PC-3 (cell line): ENCODE measurements at regions of chr16 and their contacts with region 1.

Region 1: GRCh38 chr16:252366-253337 is 18.0 kb downstream of the FAM234A start:
- DNase-seq: no peak
- ATAC-seq: no peak
- H3K4me3 ChIP-seq: no peak overlapping the region
- H3K27ac ChIP-seq: no peak overlapping the region
- H3K4me1 ChIP-seq: peaks cover 9% of the 10 kb centered on the region; the same call in 1 of the 2 replicates
- H3K27me3 ChIP-seq: no peaks in the 10 kb centered on the region
- CTCF ChIP-seq: no peak

Region 2: DNA sequence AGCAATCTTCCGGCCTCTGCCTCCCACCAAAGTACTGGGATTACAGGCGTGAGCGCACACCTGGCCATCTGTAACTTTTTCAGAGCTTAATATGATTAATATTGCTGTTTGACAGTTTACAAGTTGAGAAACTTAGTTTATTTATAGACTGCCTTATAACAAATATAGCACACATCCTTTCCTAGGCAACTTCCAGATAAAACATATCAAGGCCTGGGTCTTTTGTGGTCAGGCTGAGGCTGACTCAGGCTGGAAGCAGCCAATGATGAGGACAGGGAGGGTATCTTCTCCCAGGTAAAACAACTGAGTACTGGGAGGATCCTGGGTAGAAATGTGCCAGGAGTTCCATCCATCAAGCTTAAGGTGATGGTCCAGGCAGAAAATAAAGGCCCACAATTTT is 39.7 kb before region 1 on chr16:
- CTCF ChIA-PET with region 1: no interaction called
- POLR2A ChIA-PET with region 1: no interaction called
- intact Hi-C with region 1: no loop called
- DNase-seq: no peak
- ATAC-seq: no peak
- H3K4me3 ChIP-seq: no peak overlapping the region
- H3K27ac ChIP-seq: no peak overlapping the region
- H3K4me1 ChIP-seq: no peaks in the 10 kb centered on the region
- H3K27me3 ChIP-seq: no peaks in the 10 kb centered on the region
- CTCF ChIP-seq: no peak

Region 3: GRCh38 chr16:242281-242680 is 10.4 kb before region 1 on chr16:
- CTCF ChIA-PET with region 1: no interaction called
- POLR2A ChIA-PET with region 1: interaction called, 19 read pairs
- intact Hi-C with region 1: no loop called
- DNase-seq: no peak
- ATAC-seq: 0 out of 2 replicates have a peak, but pooled peaks have one; percentile 15
- H3K4me3 ChIP-seq: no peak overlapping the region
- H3K27ac ChIP-seq: no peak overlapping the region
- H3K4me1 ChIP-seq: no peaks in the 10 kb centered on the region
- H3K27me3 ChIP-seq: no peaks in the 10 kb centered on the region
- CTCF ChIP-seq: no peak

Region 4: DNA sequence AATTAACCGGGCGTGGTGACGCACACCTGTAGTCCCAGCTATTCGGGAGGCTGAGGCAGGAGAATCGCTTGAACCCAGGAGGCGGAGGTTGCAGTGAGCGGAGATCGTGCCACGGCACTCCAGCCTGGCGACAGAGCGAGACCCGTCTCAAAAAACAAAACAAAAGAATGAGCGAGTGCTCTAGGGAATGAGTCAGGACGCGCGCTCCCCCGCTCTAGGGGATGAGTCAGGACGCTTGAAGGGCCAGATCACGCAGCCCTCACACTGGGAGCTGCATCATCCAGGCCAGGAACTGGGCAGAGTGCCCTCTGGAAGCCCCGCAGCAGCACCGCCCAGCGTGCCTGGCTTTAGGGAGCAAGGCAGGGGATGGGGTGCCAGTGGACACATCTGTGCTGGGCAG is 374.1 kb after region 1 on chr16:
- CTCF ChIA-PET with region 1: no interaction called
- POLR2A ChIA-PET with region 1: interaction called, 16 read pairs
- intact Hi-C with region 1: no loop called
- DNase-seq: peak; percentile 92
- ATAC-seq: peak; percentile 84
- H3K4me3 ChIP-seq: peak overlapping the region; percentile 27; the same call in 1 of the 2 replicates
- H3K27ac ChIP-seq: peak overlapping the region; percentile 44
- H3K4me1 ChIP-seq: peaks cover 28% of the 10 kb centered on the region
- H3K27me3 ChIP-seq: no peaks in the 10 kb centered on the region
- CTCF ChIP-seq: no peak